ENCODE measurements at regions of chr3 and their contacts with region 1.

Region 1: DNA sequence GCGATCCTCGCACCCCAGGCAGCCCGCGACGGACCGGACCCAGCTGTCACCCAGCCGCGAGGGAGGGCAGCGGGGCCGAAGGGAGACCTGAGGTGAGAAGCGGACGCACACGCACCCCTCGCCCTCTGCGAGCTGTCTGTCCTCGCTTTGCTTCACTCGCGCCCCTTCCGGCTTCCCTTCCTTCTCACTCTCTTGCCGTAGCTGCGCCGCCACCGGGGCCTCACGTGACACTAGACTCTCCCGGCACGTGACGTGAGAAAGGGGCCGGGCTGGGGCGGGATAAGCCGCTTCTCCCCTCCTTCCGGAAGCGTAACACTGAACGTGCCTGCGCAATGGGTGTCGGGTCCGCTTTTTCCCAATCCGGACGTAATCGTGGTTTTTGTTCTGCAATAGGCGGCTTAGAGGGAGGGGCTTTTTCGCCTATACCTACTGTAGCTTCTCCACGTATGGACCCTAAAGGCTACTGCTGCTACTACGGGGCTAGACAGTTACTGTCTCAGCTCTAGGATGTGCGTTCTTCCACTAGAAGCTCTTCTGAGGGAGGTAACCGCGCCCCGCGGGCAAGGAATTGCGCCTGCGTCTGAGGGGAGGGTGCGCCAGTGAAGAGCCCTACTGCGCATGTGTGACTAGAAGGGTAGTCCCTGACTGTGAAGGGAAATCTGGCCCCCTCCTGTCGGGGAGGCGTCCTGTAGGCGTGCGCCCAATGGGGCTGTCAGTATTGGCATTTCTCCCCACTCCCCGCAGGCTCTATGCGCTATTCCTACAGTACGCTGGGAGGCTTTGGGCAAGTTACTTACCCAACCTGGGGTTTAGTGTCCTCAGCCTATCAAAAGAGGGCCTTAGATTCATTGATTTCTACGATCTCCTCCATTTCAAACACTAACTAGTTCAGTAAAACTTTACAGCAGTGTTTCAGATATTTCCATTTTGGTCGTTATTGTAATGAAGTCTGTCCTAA is at the starts of genes ATG3 and SLC35A5:
- DNase-seq: peak; percentile 98
- ATAC-seq: peak; percentile 83
- H3K4me3 ChIP-seq: peak within 1 kb of the TSS; percentile 96
- H3K27ac ChIP-seq: peak within 1 kb of the TSS; percentile 92
- H3K4me1 ChIP-seq: peaks cover 21% of the 10 kb centered on the region
- H3K27me3 ChIP-seq: no peaks in the 10 kb centered on the region
- CTCF ChIP-seq: no peak
- total RNA-seq, gene ATG3: 117 and 120 TPM in 2 replicates
- total RNA-seq, gene SLC35A5: 16.0 and 17.7 TPM in 2 replicates

Region 2: DNA sequence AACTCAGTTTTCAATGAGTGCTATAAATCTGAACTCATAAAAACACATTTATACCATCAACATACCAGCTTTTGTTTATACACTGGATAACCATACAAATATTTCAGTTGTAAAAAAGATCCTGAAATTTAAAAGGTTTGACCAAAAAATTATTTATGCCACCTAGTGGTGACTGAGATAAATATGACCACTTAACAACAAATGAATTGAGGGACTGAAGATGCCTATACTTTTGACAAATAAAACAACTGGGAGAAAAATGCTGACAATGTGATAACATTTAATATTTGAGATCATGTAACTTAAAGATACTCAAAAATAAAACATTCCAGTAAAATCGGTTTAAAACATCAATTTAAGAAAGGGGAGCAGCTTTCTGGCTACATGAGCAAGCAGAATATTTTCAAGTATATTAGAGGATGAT is 30.6 kb before region 1 on chr3:
- CTCF ChIA-PET with region 1: no interaction called
- POLR2A ChIA-PET with region 1: no interaction called
- intact Hi-C with region 1: loop called (anchors 1 kb)
- DNase-seq: peak; percentile 71
- ATAC-seq: peak; percentile 4; the same call in 1 of the 2 replicates
- H3K4me3 ChIP-seq: no peak overlapping the region
- H3K27ac ChIP-seq: peak overlapping the region; percentile 68; the same call in 1 of the 2 replicates
- H3K4me1 ChIP-seq: peaks cover 20% of the 10 kb centered on the region
- H3K27me3 ChIP-seq: no peaks in the 10 kb centered on the region
- CTCF ChIP-seq: peak; percentile 86

Region 3: DNA sequence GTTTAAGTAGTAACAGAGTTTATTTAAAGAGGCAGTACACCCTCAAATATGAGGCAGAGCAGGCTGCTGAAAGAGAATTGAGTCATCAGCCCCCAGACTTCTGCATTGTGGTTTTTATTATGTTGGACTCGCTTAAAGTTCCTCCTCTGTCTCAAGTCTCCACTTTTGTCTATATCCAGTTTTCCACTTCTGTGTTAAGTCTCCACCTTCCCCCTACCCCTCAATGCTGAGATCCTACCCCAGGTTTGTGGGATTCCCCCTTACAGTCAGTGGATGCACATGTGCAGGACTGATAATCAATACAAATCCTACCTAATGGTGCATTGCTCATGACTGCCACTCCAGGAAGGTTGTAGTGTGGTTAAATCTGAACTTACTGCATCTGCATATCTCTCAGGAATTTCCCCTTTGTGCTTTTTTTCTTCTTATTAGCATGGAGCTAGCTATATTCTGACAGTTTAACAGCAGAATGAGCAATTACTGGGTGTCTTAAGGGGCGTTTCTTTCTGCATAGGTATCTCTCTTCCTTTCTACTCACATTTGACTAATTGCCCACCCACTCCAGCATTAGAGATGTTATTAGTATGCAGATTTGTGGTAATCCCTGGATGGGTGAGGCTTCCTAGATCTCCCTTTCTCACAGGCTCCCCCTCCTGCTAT is 296.5 kb after region 1 on chr3:
- CTCF ChIA-PET with region 1: no interaction called
- POLR2A ChIA-PET with region 1: no interaction called
- intact Hi-C with region 1: no loop called
- DNase-seq: no peak
- ATAC-seq: no peak
- H3K4me3 ChIP-seq: no peak overlapping the region
- H3K27ac ChIP-seq: no peak overlapping the region
- H3K4me1 ChIP-seq: no peaks in the 10 kb centered on the region
- H3K27me3 ChIP-seq: no peaks in the 10 kb centered on the region
- CTCF ChIP-seq: no peak

Region 4: DNA sequence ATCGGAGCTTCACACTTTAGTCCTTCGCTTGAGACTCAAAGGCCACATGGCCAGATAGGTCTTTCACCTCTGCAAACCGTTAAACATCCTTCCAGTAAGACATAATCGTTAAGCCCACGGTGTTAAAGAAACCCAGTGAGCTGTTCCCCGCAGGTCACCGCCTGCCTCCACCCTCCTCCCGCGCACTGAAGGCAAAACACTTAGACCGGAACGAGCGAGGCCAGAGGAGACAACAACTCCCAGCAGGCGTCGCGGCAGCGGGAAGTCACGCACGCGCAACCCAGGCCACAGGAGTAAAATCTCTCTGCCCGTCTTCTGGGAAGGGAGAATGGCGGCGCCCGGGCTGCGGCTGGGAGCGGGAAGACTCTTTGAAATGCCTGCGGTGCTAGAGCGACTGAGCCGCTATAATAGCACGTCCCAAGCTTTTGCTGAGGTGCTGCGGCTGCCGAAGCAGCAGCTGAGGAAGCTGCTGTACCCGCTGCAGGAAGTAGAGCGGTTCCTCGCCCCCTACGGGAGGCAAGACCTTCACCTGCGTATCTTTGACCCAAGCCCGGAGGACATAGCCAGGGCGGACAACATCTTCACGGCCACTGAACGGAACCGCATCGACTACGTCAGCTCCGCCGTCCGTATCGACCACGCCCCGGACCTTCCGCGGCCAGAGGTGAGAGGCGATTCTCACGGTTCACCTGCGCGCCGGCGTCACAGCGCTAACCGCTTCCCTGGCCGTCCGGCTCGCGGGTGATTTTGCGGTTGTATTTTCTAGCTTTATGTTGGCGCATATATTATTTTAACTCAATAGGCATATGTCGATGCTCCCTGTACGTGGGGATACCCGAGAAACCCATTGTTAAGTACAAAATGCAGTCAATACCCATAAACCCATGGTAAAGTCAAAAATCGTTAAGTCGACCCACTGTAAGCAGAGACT is 428.9 kb after region 1 on chr3 and contains the start of gene GTPBP8:
- CTCF ChIA-PET with region 1: no interaction called
- POLR2A ChIA-PET with region 1: no interaction called
- intact Hi-C with region 1: loop called (anchors 1 kb)
- DNase-seq: peak; percentile 89
- ATAC-seq: peak; percentile 95
- H3K4me3 ChIP-seq: peak within 1 kb of the TSS; percentile 87
- H3K27ac ChIP-seq: peak within 1 kb of the TSS; percentile 93
- H3K4me1 ChIP-seq: peaks cover 23% of the 10 kb centered on the region
- H3K27me3 ChIP-seq: no peaks in the 10 kb centered on the region
- CTCF ChIP-seq: no peak
- total RNA-seq, gene GTPBP8: 63.8 and 87.2 TPM in 2 replicates

Measured in PC-3 (cell line).